ENCODE measurements at regions of chr18 and their contacts with region 1.

Region 1: DNA sequence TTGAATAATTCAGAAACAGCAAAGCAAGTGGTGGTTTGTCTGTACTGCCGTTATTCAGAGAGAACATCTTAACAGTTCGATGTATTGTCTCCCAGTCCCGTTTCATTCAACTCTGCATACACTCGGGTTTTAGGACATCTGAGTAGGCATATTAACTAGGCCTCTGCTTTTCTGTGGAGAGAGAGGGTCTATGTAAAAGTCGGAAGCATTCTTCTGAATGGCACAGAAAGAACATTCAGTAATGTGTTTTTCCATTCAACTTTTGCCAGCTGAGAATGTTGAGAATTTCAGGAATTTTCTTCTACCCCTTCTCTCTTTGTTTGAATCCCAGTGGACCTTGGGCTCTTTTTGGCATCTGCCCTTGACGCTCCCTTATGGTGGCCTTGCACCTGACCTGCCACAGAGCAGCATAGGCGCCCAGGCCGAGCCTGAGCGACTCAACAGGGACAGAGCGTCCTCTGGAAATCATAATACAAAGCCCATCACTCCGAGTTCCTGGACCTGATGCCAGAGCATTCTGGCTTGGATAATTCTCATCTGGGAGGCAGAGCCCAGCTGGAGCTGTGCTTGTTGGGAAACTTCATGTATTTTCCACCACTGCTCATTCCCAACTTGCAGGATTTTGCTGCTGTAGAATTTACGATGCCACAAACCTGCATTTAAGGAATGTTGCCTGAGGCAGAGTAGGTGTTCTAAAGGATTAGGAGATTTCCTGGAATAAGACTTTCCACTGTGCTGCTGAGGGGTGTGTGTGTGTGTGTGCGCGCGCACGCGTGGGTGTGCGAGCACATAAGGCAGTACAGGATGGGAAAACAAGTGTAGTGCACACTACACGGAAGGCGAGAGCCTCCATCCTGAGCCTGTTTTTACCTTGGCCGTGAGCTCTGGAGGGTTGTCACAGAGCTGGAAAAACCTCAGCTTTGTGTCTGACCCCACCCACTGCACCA is 77.2 kb upstream of the TXNDC2 start:
- DNase-seq: peak in 3 of 10 donors; percentile 50 to 88 (median 67)

Region 2: DNA sequence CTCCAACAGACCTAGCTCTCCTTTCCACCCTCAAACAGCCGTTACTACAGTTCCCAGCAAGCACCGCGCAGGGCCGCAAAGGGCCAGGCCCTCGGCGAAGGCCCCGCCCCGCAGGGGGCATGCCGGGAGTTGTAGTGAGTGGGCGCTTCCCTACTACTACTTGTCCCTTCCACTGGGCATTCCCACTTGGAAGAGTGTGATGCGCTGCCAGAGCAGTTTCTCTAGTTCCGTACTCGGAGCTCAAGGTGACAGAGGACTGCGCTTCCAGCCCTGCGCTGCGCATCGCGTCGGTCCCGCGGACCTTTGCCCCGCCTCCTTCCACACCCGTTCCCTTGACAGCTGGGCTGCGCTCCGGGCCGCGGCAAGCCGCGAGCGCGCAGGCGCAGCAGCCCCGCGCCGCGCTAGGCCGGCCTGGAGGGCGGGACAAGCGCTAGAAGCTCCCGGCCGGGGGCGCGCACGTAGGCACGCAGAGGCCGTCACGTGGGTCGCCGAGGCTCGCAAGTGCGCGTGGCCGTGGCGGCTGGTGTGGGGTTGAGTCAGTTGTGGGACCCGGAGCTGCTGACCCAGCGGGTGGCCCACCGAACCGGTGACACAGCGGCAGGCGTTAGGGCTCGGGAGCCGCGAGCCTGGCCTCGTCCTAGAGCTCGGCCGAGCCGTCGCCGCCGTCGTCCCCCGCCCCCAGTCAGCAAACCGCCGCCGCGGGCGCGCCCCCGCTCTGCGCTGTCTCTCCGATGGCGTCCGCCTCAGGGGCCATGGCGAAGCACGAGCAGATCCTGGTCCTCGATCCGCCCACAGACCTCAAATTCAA is 105.2 kb after region 1 on chr18 and contains the start of gene VAPA:
- intact Hi-C with region 1: loop called (anchors 10 kb)
- DNase-seq: peak; percentile 94 to 99 (median 98)

Measured in posterior cingulate gyrus (tissue), 11 donors.